ENCODE measurements at regions of chr22 and their contacts with region 1.

Region 1: DNA sequence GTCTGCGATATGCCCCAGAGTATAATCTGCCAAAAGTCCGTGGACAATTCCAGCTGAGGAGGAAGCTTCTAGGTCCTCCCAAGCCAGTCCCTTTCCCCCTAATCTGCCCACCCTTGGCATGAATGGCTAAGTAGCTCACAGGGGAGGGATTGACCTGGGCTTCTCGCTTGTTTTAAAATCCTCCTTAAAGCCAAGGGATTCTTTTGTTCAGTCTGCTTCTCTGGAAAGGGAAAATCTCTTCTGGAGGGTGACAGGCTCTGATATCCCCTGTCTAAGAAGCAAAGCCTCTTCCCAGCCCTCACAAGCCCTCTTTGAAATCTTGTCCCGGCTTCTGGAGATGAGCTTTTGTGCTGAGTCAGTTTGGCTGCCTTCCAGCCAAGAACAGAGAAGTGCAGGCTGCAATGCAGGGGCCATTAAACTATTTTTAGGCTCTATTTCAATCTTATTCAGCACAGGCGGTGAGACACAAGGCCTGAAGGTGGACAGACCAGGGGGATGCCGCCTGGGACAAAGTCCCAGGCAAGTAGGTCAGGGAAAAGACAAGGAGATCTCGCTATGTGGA is 23.9 kb downstream of the NEFH start:
- DNase-seq: no peak
- ATAC-seq: no peak
- H3K4me3 ChIP-seq: no peak overlapping the region
- H3K27ac ChIP-seq: no peak overlapping the region
- H3K4me1 ChIP-seq: no peaks in the 10 kb centered on the region
- H3K27me3 ChIP-seq: no peaks in the 10 kb centered on the region
- CTCF ChIP-seq: no peak

Region 2: GRCh38 chr22:29536411-29536810 is 32.5 kb after region 1 on chr22:
- CTCF ChIA-PET with region 1: no interaction called
- POLR2A ChIA-PET with region 1: interaction called, 10 read pairs
- in situ Hi-C with region 1: no loop called
- intact Hi-C with region 1: no loop called
- DNase-seq: no peak
- ATAC-seq: no peak
- H3K4me3 ChIP-seq: no peak overlapping the region
- H3K27ac ChIP-seq: no peak overlapping the region
- H3K4me1 ChIP-seq: no peaks in the 10 kb centered on the region
- H3K27me3 ChIP-seq: no peaks in the 10 kb centered on the region
- CTCF ChIP-seq: no peak